ENCODE measurements at regions of chr7 and their contacts with region 1.

Region 1: DNA sequence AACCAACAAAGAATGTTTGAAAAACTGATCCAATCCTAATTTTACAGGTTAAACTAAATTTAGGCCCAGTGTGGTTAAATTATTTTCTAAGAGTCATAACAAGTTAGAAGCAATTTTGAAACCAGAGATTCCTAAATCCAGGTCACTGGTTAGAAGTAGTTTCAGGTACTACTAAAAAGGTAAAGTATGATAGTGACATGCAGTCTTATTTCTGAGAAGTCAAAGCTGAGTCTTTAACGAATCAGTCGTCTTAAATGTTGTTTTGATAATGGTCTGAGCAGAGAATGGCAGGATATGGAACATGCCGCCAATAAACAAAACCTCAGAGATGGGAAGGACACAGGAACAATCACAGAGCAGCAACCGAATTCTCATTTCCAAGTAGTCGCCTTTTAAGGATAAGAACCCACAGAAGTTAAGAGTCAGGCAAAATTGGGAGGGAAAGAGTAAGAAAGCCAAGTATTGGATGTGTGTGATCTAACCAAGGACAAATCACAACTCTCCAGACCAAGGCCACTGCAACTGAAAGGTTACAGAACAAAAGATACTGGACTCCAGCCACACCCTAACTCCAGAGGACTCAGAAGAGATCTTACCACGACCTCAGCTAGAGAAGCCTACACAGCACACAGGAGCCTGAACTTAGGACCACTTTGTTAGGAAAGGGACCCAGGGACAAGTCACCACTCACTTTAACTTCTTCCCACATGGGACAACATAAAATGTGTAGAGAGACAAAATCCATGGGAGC is 19.7 kb downstream of the TMEM243 start:
- DNase-seq: no peak
- ATAC-seq: peak in 2 of 4 experiments; percentile 23 to 25
- H3K4me3 ChIP-seq: no peak overlapping the region
- H3K4me3 Mint-ChIP-seq: peak overlapping the region in 2 of 3 donors; percentile 25 to 27
- H3K27ac ChIP-seq: peak overlapping the region; percentile 26
- H3K27ac Mint-ChIP-seq: peak overlapping the region; percentile 72 to 77
- H3K4me1 ChIP-seq: peaks cover 2 to 14% of the 10 kb centered on the region in 2 experiments
- H3K4me1 Mint-ChIP-seq: peaks cover 63 to 75% (median 74%) of the 10 kb centered on the region in 3 donors
- H3K27me3 ChIP-seq: no peaks in the 10 kb centered on the region
- H3K27me3 Mint-ChIP-seq: no peaks in the 10 kb centered on the region

Region 2: DNA sequence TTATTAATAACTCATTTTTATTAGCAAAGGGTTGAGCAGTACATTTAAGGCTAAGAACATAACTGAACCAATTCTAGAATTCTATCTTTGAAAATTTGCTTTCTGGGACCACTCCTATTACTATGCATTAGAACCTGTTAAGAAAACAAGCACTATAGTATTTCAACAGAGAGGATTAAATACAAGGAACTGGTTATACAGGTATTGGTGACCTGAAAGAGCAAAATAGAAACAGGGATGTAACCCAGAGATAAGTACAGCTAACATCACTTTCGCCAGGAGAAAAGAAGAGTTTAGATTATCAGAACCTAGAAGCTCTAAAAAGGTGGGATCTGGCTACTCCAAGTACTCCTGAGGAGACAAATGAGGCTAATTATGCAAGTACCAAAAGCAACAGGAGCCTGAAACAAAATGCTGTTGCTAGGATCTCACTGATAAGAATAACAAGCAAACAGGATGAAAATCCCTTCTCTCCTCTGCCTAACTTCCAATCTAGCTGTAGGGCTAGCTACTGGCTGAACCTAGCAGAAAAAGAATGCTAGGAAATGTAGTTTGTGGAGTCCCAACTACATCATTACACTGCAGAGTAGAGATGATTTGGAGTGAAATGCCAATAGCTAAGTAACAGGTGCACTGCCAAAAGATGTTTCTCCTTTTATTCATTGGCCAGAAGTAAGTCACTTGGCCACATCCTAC is 108.2 kb before region 1 on chr7:
- CTCF ChIA-PET with region 1: no interaction called
- POLR2A ChIA-PET with region 1: no interaction called
- DNase-seq: no peak
- ATAC-seq: no peak
- H3K4me3 ChIP-seq: no peak overlapping the region
- H3K4me3 Mint-ChIP-seq: no peak overlapping the region
- H3K27ac ChIP-seq: no peak overlapping the region
- H3K27ac Mint-ChIP-seq: no peak overlapping the region
- H3K4me1 ChIP-seq: no peaks in the 10 kb centered on the region
- H3K4me1 Mint-ChIP-seq: no peaks in the 10 kb centered on the region
- H3K27me3 ChIP-seq: peaks cover 0 to 4% of the 10 kb centered on the region in 2 experiments
- H3K27me3 Mint-ChIP-seq: peaks cover 6 to 14% of the 10 kb centered on the region in 2 donors

Region 3: GRCh38 chr7:87129848-87130247 is 70.0 kb before region 1 on chr7:
- CTCF ChIA-PET with region 1: no interaction called
- POLR2A ChIA-PET with region 1: interaction called in 1 of 2 experiments, 11 read pairs
- DNase-seq: no peak
- ATAC-seq: no peak
- H3K4me3 ChIP-seq: no peak overlapping the region
- H3K4me3 Mint-ChIP-seq: no peak overlapping the region
- H3K27ac ChIP-seq: no peak overlapping the region
- H3K27ac Mint-ChIP-seq: no peak overlapping the region
- H3K4me1 ChIP-seq: no peaks in the 10 kb centered on the region
- H3K4me1 Mint-ChIP-seq: peaks cover 0 to 8% (median 2%) of the 10 kb centered on the region in 3 donors
- H3K27me3 ChIP-seq: no peaks in the 10 kb centered on the region
- H3K27me3 Mint-ChIP-seq: peaks cover 3 to 12% of the 10 kb centered on the region in 2 donors

Region 4: DNA sequence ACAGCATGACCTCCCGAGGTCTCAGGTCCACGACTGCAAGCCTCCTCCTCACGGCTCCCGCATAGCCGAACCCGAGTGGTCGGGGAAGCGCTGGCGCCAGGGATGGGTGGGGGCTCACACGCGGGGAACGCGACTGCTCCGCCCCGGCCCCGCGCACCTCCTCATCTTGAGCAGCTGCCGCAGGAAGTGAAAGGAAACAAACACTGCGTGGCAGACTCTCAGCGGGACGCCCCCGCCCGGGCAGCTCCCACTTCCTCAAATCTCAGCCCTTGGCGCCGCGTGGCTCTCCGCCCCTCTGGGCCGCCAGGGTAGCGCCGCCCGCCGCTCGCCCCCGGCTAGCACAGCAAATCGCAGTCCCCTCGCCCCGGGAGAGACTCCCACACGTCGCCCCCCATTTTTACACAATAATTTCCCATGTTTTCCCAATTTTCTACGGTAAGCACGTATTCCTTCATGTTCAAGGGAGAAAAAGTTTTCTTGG is 19.7 kb after region 1 on chr7 and contains the start of gene TMEM243:
- CTCF ChIA-PET with region 1: interaction called, 4 to 5 read pairs
- POLR2A ChIA-PET with region 1: interaction called, 5 to 11 read pairs
- DNase-seq: peak; percentile 67 to 93 (median 84)
- ATAC-seq: peak; percentile 70 to 82 (median 80)
- H3K4me3 ChIP-seq: peak within 1 kb of the TSS; percentile 85 to 94
- H3K4me3 Mint-ChIP-seq: peak within 1 kb of the TSS; percentile 98 to 100 (median 100)
- H3K27ac ChIP-seq: peak within 1 kb of the TSS; percentile 89
- H3K27ac Mint-ChIP-seq: peak within 1 kb of the TSS; percentile 98 to 100
- H3K4me1 ChIP-seq: peaks cover 31 to 43% of the 10 kb centered on the region in 2 experiments
- H3K4me1 Mint-ChIP-seq: peaks cover 43 to 55% (median 46%) of the 10 kb centered on the region in 3 donors
- H3K27me3 ChIP-seq: peaks cover 2 to 4% of the 10 kb centered on the region in 2 experiments
- H3K27me3 Mint-ChIP-seq: no peaks in the 10 kb centered on the region
- total RNA-seq, gene TMEM243: 95.2 to 170 (median 108) TPM

Measured in T-cell (primary cell).